GM12878 (cell line): ENCODE measurements at regions of chr2 and their contacts with region 1.

Region 1: DNA sequence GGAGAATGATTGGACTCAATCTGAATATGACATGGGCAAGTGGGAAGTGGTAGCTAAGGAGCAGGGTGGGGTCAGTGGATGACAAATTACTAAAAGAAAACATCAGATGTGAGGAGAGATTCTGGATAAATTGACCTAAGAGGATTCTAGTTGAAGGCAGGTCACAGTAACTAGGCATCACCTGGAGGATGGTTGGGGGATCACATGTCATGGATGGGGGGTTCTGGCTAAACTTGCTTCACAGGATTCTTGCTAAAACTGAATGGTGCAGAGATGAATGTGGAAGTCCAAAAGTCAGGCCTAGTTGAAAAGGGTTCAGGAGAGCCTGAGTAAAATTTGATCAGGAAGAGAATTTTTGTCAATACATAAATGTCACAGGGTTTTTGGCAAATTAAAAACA is 18.3 kb downstream of the CLHC1 start:
- DNase-seq: no peak
- ATAC-seq: no peak
- H3K4me3 ChIP-seq: no peak overlapping the region
- H3K27ac ChIP-seq: no peak overlapping the region
- H3K4me1 ChIP-seq: no peaks in the 10 kb centered on the region
- H3K27me3 ChIP-seq: no peaks in the 10 kb centered on the region
- CTCF ChIP-seq: no peak
- EP300 ChIP-seq: no peak
- POLR2A ChIP-seq: no peak
- RAD21 ChIP-seq: no peak

Region 2: GRCh38 chr2:54755641-54756326 is 458.0 kb before region 1 on chr2:
- CTCF ChIA-PET with region 1: no interaction called
- POLR2A ChIA-PET with region 1: no interaction called
- RAD21 ChIA-PET with region 1: no interaction called
- SMC1A ChIA-PET with region 1: no interaction called
- in situ Hi-C with region 1: no loop called
- intact Hi-C with region 1: no loop called
- DNase-seq: peak; percentile 23
- ATAC-seq: peak; percentile 68
- H3K4me3 ChIP-seq: peak overlapping the region; percentile 18; the same call in 1 of the 2 replicates
- H3K27ac ChIP-seq: peak overlapping the region; percentile 19; the same call in 1 of the 2 replicates
- H3K4me1 ChIP-seq: peaks cover 27% of the 10 kb centered on the region
- H3K27me3 ChIP-seq: no peaks in the 10 kb centered on the region; a peak in 1 of 4 replicates
- CTCF ChIP-seq: peak; percentile 6 to 47 (median 26); a peak in 4 of 6 replicates
- EP300 ChIP-seq: no peak
- POLR2A ChIP-seq: no peak
- RAD21 ChIP-seq: peak; percentile 54

Region 3: GRCh38 chr2:55239656-55240222 is 25.9 kb after region 1 on chr2:
- CTCF ChIA-PET with region 1: no interaction called
- POLR2A ChIA-PET with region 1: interaction called, 10 read pairs
- RAD21 ChIA-PET with region 1: no interaction called
- SMC1A ChIA-PET with region 1: no interaction called
- in situ Hi-C with region 1: no loop called
- intact Hi-C with region 1: no loop called
- DNase-seq: no peak
- ATAC-seq: no peak
- H3K4me3 ChIP-seq: no peak overlapping the region
- H3K27ac ChIP-seq: no peak overlapping the region
- H3K4me1 ChIP-seq: no peaks in the 10 kb centered on the region
- H3K27me3 ChIP-seq: no peaks in the 10 kb centered on the region
- CTCF ChIP-seq: no peak
- EP300 ChIP-seq: no peak
- POLR2A ChIP-seq: no peak
- RAD21 ChIP-seq: no peak